Sciatic nerve (tissue), 2 donors: ENCODE measurements at regions of chr3 and their contacts with region 1.

Region 1: GRCh38 chr3:49454458-49454857 is 15.6 kb upstream of the DAG1 start:
- DNase-seq: no peak
- ATAC-seq: peak; percentile 56

Region 2: DNA sequence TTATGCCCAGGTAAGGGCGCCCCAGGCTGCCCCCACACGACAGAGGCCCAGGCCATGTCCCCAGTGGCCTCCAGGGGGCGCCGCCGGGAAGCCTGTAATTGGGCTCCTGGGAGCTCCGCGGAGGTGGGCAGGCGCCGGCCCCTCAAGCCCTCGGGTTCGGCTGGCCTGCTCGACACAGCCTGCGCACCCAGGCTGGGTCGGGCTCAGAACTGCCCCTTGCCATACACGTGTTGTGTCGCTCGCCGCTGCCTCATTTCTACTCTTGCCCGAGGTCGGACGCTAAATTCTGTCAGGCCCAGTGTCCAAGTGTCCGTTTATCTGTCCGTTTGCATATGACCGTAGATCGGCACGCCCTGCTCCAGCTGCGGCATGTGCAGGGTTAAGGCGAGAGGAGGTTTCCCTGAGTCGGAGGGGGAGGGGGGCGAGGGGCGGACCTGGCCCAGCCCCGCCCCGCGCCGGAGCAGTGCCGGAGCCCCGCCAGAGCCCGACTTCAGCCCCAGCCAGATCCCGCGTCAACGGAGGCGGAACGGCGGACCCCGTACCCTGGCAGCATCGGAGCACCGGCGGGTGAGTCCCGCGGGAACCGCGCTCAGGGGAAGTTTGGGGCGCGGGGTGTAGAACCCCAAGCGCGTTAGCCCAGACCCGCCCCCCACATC is 283.2 kb before region 1 on chr3 and contains the start of gene KLHDC8B:
- intact Hi-C with region 1: loop called (anchors 10 kb)
- DNase-seq: peak; percentile 90
- ATAC-seq: peak; percentile 91
- total RNA-seq, gene KLHDC8B: 32.5 TPM

Region 3: DNA sequence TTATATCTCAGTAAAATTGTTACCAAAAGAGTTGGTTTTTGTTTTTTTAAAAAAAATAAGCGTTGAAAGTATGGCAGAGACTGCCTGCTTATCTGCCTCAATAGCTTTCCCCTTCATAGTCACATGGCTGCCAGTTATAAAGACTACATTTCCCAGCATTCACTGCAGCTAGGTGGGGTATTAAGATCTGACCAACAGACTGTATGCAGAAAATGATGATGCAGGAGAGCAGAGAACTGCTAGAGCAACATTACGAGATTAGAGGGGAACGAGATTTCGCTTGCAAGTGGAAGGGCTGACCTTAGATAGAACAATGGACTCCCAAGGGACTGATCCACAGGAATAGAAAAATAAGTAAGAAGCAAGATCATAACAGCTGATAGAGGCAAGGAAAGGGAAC is 57.0 kb before region 1 on chr3:
- intact Hi-C with region 1: no loop called
- DNase-seq: no peak
- ATAC-seq: peak; percentile 90

Region 4: DNA sequence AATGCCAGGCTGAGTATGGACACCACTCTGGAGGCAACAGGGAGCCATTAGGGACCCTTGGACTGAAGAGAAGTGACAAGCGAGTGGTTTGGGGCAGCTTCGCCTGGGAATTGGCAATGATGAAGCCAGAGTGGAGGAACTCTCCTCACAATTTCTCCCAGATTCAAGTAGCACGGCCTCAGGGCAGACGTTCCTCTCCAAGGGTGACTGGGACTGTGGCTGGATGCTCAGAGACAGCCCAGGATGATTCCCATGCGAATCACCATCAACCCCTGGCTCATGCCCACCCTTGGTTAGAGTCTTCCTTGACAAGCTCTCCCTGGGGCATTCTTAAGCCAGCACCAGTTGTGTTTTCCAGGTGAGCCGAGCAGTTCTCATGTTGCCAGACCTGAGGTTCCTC is 1204.0 kb after region 1 on chr3:
- intact Hi-C with region 1: no loop called
- DNase-seq: peak; percentile 40
- ATAC-seq: no peak